Mammary epithelial cell (primary cell): ENCODE measurements at regions of chr5 and their contacts with region 1.

Region 1: DNA sequence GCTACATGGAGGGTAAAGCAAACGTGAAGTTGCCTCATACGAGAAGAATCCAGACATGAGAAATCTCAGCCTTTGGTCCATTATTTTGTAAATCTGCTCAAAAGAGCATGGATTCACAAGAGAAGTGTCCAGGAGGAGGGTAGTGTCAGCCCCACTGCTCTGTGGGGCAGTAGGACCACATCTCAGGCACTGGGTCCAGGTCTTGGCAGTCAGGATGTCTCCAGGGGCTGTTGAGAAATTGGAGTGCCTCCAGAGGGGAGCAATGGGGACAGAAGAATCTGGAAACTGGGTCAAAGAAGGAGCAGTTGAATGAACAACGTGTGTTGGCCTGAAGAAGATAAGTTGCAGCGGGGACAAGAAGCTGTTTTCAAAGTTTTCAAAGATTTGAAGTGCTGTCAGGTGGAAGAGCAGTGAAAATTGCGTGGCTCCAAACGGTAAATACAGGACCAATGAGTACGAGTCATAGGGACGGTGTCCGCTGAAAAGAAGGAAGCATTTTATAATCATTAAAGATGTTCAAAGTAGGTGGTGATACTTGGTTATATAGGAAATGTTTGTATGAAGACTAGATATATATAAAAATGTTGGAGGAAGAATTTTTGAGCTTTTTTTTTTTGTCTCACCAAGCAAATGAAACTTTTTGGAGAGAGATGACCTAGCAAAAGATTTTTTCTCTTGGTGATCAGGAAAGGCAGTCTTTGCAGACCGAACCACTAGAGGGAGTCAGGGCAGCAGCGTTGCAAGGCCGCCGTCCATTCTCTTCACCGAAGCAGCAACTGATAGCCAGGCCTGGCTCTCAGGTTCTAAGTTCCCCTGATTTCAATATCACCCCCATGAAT is 57.1 kb upstream of the ZBED3 start:
- DNase-seq: peak; percentile 46
- H3K4me3 ChIP-seq: no peak overlapping the region
- H3K27ac ChIP-seq: no peak overlapping the region
- H3K4me1 ChIP-seq: no peaks in the 10 kb centered on the region
- H3K27me3 ChIP-seq: peaks cover under 1% of the 10 kb centered on the region
- CTCF ChIP-seq: peak; percentile 86 to 93

Region 2: GRCh38 chr5:76679231-76679630 is 465.0 kb before region 1 on chr5:
- CTCF ChIA-PET with region 1: no interaction called
- dilution Hi-C with region 1: no loop called
- in situ Hi-C with region 1: no loop called
- intact Hi-C with region 1: no loop called
- DNase-seq: no peak
- H3K4me3 ChIP-seq: no peak overlapping the region
- H3K27ac ChIP-seq: no peak overlapping the region
- H3K4me1 ChIP-seq: no peaks in the 10 kb centered on the region
- H3K27me3 ChIP-seq: no peaks in the 10 kb centered on the region
- CTCF ChIP-seq: no peak

Region 3: GRCh38 chr5:76908166-76908565 is 236.1 kb before region 1 on chr5:
- CTCF ChIA-PET with region 1: no interaction called
- dilution Hi-C with region 1: no loop called
- in situ Hi-C with region 1: no loop called
- intact Hi-C with region 1: no loop called
- DNase-seq: no peak
- H3K4me3 ChIP-seq: no peak overlapping the region
- H3K27ac ChIP-seq: no peak overlapping the region
- H3K4me1 ChIP-seq: no peaks in the 10 kb centered on the region
- H3K27me3 ChIP-seq: peaks cover 2% of the 10 kb centered on the region
- CTCF ChIP-seq: no peak

Region 4: DNA sequence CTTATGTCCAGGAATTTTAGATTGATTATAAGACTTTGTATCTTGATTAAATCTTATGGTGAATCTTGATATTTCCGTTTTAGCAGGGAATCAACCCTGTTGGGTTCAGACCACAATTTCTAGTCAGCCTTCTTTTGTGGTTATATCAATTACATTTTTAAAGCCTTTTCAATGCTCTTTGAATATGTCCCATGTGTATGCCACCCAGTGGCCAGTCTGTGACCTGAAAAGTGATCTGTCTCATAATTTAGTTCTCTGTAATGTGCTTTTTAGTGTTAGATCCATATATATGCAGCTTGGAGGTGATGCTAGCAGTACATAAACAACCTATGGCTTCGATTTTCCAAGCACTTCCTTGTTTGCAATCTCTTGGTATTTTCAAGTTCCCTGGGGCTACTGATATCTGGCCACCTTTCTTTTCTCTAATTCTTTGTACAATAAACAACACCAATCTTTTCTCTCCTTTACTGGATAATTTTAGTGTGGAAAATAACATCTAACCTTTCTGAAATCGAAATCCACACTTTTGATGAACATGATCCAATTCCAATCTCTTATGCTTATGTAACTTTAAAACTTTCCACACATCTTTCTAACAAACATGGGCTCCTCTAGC is 95.0 kb after region 1 on chr5:
- CTCF ChIA-PET with region 1: no interaction called
- dilution Hi-C with region 1: no loop called
- in situ Hi-C with region 1: no loop called
- intact Hi-C with region 1: loop called (anchors 1 kb)
- DNase-seq: peak; percentile 9
- H3K4me3 ChIP-seq: no peak overlapping the region
- H3K27ac ChIP-seq: no peak overlapping the region
- H3K4me1 ChIP-seq: no peaks in the 10 kb centered on the region
- H3K27me3 ChIP-seq: peaks cover 5% of the 10 kb centered on the region
- CTCF ChIP-seq: peak; percentile 22 to 48

Region 5: GRCh38 chr5:77437194-77437593 is 293.0 kb after region 1 on chr5:
- CTCF ChIA-PET with region 1: no interaction called
- dilution Hi-C with region 1: no loop called
- in situ Hi-C with region 1: no loop called
- intact Hi-C with region 1: loop called (anchors 10 kb)
- DNase-seq: no peak
- H3K4me3 ChIP-seq: no peak overlapping the region
- H3K27ac ChIP-seq: no peak overlapping the region
- H3K4me1 ChIP-seq: no peaks in the 10 kb centered on the region
- H3K27me3 ChIP-seq: no peaks in the 10 kb centered on the region
- CTCF ChIP-seq: peak in 1 of 2 donors; percentile 2

Region 6: GRCh38 chr5:77491783-77492652 is 347.8 kb after region 1 on chr5 and contains the start of gene WDR41:
- CTCF ChIA-PET with region 1: interaction called, 4 read pairs
- dilution Hi-C with region 1: no loop called
- in situ Hi-C with region 1: no loop called
- intact Hi-C with region 1: loop called (anchors 1 kb)
- DNase-seq: peak; percentile 95
- H3K4me3 ChIP-seq: peak within 1 kb of the TSS; percentile 96 to 99 (median 98)
- H3K27ac ChIP-seq: peak within 1 kb of the TSS; percentile 99
- H3K4me1 ChIP-seq: peaks cover 21% of the 10 kb centered on the region
- H3K27me3 ChIP-seq: no peaks in the 10 kb centered on the region
- CTCF ChIP-seq: peak; percentile 76 to 84
- total RNA-seq, gene WDR41: 93.7 to 132 TPM

Region 7: GRCh38 chr5:78008356-78008967 is 864.2 kb after region 1 on chr5:
- CTCF ChIA-PET with region 1: no interaction called
- dilution Hi-C with region 1: no loop called
- in situ Hi-C with region 1: no loop called
- intact Hi-C with region 1: loop called (anchors 5 kb)
- DNase-seq: peak; percentile 19
- H3K4me3 ChIP-seq: no peak overlapping the region
- H3K27ac ChIP-seq: no peak overlapping the region
- H3K4me1 ChIP-seq: no peaks in the 10 kb centered on the region
- H3K27me3 ChIP-seq: no peaks in the 10 kb centered on the region
- CTCF ChIP-seq: peak; percentile 88 to 93